ENCODE measurements at regions of chr13 and their contacts with region 1.

Region 1: GRCh38 chr13:48769107-48769704 is 115.5 kb downstream of the CYSLTR2 start:
- DNase-seq: peak; percentile 93
- H3K4me3 ChIP-seq: no peak overlapping the region
- H3K27ac ChIP-seq: no peak overlapping the region
- H3K4me1 ChIP-seq: no peaks in the 10 kb centered on the region
- H3K27me3 ChIP-seq: peaks cover 15 to 30% of the 10 kb centered on the region in 2 experiments
- CTCF ChIP-seq: peak; percentile 92 to 98
- POLR2A ChIP-seq: no peak

Region 2: DNA sequence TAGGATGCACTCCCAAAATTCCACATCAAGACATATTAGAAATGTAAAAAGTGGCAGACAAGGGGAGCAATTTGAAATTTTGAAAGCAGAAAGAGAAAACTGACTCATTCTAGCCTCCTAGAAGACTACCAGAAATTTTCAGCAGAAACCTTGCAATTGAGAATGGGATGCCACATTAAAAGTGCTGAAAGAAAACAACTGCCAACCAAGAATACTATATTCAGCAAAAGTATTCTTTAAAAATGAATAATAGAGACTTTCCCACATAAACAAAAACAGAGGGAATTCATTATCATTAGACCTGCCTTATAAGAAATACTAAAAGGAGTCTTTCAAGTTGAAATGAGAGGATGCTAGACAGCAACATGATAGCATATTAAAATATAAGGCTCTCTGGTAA is 1794.0 kb before region 1 on chr13:
- CTCF ChIA-PET with region 1: interaction called, 75 read pairs
- POLR2A ChIA-PET with region 1: no interaction called
- dilution Hi-C with region 1: no loop called
- intact Hi-C with region 1: no loop called
- DNase-seq: no peak
- H3K4me3 ChIP-seq: no peak overlapping the region
- H3K27ac ChIP-seq: no peak overlapping the region
- H3K4me1 ChIP-seq: no peaks in the 10 kb centered on the region
- H3K27me3 ChIP-seq: no peaks in the 10 kb centered on the region
- CTCF ChIP-seq: no peak
- POLR2A ChIP-seq: no peak

Region 3: GRCh38 chr13:48233046-48233907 is 535.9 kb before region 1 on chr13 and contains the start of gene ITM2B:
- CTCF ChIA-PET with region 1: interaction called, 10 read pairs
- POLR2A ChIA-PET with region 1: no interaction called
- dilution Hi-C with region 1: no loop called
- intact Hi-C with region 1: loop called (anchors 5 kb)
- DNase-seq: peak; percentile 76
- H3K4me3 ChIP-seq: peak within 1 kb of the TSS; percentile 67 to 95 (median 77)
- H3K27ac ChIP-seq: peak within 1 kb of the TSS; percentile 86
- H3K4me1 ChIP-seq: peaks cover 45% of the 10 kb centered on the region
- H3K27me3 ChIP-seq: peaks cover 2 to 4% of the 10 kb centered on the region in 2 experiments
- CTCF ChIP-seq: peak; percentile 34 to 36
- POLR2A ChIP-seq: peak; percentile 55
- total RNA-seq, gene ITM2B: 245 and 271 TPM in 2 replicates

Region 4: GRCh38 chr13:48595431-48596429 is 173.5 kb before region 1 on chr13:
- CTCF ChIA-PET with region 1: interaction called, 131 read pairs
- POLR2A ChIA-PET with region 1: no interaction called
- dilution Hi-C with region 1: no loop called
- intact Hi-C with region 1: loop called (anchors 1 kb)
- DNase-seq: peak; percentile 91
- H3K4me3 ChIP-seq: no peak overlapping the region
- H3K27ac ChIP-seq: no peak overlapping the region
- H3K4me1 ChIP-seq: peaks cover 6% of the 10 kb centered on the region
- H3K27me3 ChIP-seq: peaks cover 4 to 7% of the 10 kb centered on the region in 2 experiments
- CTCF ChIP-seq: peak; percentile 49 to 66
- POLR2A ChIP-seq: no peak

Region 5: DNA sequence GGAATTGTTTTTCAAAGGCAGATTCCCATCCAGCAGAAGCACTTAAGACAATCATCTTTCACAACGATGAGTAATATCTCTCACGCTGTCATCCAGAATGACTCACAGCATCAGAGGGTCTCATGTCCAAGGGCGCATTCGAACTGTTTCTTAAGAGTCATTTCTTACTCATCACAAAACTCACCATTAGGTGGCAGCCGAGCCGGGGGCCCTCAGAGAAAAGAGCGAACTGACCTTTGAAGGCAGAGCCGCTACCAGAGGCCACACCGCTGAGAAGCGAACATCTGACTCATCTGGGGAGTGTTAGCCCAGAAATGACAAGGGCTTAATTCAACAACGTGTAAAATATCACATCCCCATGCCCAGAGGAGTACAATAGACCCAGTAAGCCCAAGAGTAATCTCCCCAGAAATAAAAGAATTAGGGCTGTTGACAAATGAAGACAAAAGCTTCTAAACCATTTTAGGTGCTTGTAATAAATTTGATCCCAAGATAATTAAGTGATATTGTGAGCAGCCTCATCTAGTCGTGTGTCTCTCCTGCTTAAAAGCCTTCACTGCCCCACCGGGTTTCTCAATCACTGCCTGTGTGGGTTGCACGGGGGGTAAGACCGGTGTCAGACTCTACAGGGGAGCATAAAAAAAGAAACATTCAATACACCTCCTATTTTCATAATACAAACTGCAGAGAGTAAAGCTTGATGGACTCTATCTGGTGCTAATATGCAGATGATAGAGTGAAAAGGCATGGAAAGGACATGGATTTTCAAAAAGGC is 19.3 kb before region 1 on chr13:
- CTCF ChIA-PET with region 1: interaction called, 66 read pairs
- POLR2A ChIA-PET with region 1: no interaction called
- dilution Hi-C with region 1: no loop called
- intact Hi-C with region 1: loop called (anchors 1 kb)
- DNase-seq: peak; percentile 86
- H3K4me3 ChIP-seq: no peak overlapping the region
- H3K27ac ChIP-seq: no peak overlapping the region
- H3K4me1 ChIP-seq: peaks cover 6% of the 10 kb centered on the region
- H3K27me3 ChIP-seq: peaks cover 0 to 3% of the 10 kb centered on the region in 2 experiments
- CTCF ChIP-seq: peak; percentile 53 to 56
- POLR2A ChIP-seq: no peak

Measured in endothelial cell of umbilical vein (primary cell).